ENCODE measurements at regions of chr12 and their contacts with region 1.

Region 1: GRCh38 chr12:103548622-103549601 is 38.2 kb upstream of the STAB2 start:
- DNase-seq: peak; percentile 54
- H3K4me3 Mint-ChIP-seq: no peak overlapping the region
- H3K27ac Mint-ChIP-seq: no peak overlapping the region
- H3K4me1 Mint-ChIP-seq: peaks cover 13% of the 10 kb centered on the region
- H3K27me3 Mint-ChIP-seq: peaks cover 17% of the 10 kb centered on the region

Region 2: GRCh38 chr12:102948941-102949352 is 600.0 kb before region 1 on chr12:
- intact Hi-C with region 1: loop called (anchors 1 kb)
- DNase-seq: no peak
- H3K4me3 Mint-ChIP-seq: no peak overlapping the region
- H3K27ac Mint-ChIP-seq: no peak overlapping the region
- H3K4me1 Mint-ChIP-seq: peaks cover 21% of the 10 kb centered on the region
- H3K27me3 Mint-ChIP-seq: peaks cover 45% of the 10 kb centered on the region

Region 3: GRCh38 chr12:103020839-103021238 is 528.1 kb before region 1 on chr12:
- intact Hi-C with region 1: loop called (anchors 10 kb)
- DNase-seq: no peak
- H3K4me3 Mint-ChIP-seq: no peak overlapping the region
- H3K27ac Mint-ChIP-seq: no peak overlapping the region
- H3K4me1 Mint-ChIP-seq: no peaks in the 10 kb centered on the region
- H3K27me3 Mint-ChIP-seq: no peaks in the 10 kb centered on the region

Region 4: GRCh38 chr12:103102225-103102744 is 446.6 kb before region 1 on chr12:
- intact Hi-C with region 1: loop called (anchors 5 kb)
- DNase-seq: no peak
- H3K4me3 Mint-ChIP-seq: no peak overlapping the region
- H3K27ac Mint-ChIP-seq: peak overlapping the region; percentile 60
- H3K4me1 Mint-ChIP-seq: peaks cover 8% of the 10 kb centered on the region
- H3K27me3 Mint-ChIP-seq: no peaks in the 10 kb centered on the region

Region 5: DNA sequence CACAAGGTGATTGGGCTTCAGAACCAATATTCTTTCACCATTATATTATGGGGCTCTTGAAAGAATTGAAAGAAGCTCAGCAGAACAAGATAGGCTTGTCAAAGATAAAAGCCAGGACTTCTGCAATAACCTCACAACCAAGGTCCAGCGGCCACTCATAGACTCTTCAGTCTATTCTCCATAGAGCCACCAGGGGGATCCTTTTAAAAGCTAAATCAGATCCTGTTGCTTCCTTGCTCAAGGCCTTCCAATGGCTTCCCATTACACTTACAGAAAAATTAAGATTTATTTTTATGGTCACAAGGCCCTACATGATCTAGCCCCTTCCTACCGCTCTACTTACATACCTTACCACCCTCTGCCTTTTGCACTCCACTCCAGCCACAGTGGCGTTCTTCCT is 222.7 kb before region 1 on chr12:
- intact Hi-C with region 1: loop called (anchors 1 kb)
- DNase-seq: no peak
- H3K4me3 Mint-ChIP-seq: no peak overlapping the region
- H3K27ac Mint-ChIP-seq: no peak overlapping the region
- H3K4me1 Mint-ChIP-seq: no peaks in the 10 kb centered on the region
- H3K27me3 Mint-ChIP-seq: no peaks in the 10 kb centered on the region

Region 6: DNA sequence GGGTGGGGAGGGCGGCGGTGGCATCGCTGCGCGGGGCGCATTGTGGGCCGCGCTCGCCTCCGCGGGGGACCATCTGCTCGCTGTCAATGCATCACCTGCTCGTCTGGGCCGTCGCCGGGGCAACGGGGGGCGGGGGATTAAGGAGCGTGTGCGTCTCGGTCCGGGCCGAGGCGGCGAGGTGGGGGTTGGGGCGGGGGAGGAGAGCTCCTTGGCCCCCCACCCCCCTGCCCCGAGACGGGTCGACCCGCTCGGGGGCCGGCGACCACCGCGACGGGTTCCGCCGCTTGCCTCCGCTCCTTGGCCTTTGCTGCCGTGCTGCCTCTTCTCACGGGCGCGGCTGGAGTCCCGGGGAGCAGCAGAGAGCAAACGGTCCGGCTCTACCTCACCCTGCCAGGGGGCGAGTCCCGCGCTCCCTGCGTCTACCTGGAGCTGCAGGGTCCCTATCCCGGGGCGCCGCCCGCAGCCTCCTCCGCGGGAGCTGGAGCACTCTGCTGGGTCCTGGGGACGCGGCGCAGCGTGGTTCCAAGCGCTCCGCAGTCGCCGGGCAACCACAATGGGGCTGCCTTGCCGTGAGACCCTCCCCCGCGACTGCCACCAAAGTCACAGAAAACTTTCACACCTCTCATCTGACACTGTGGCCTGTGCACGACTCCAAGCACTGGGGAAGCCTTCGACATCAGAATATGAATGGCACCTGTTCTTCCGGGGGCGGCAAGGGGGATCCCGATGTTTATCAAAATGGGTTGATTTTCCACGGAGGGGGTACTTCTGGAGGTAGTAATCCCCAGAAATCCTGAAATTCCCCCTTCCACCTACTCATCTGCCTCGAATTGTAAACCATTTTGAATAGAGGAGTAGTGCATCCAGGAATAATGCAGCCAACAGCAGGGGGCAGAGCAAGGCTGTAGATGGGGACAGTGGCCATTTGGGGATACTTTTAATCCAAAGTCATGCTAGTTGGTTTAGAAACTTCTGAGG is 53.1 kb before region 1 on chr12 and contains the start of gene C12orf42:
- intact Hi-C with region 1: loop called (anchors 1 kb)
- DNase-seq: peak; percentile 16
- H3K4me3 Mint-ChIP-seq: peak within 1 kb of the TSS; percentile 70
- H3K27ac Mint-ChIP-seq: peak within 1 kb of the TSS; percentile 53
- H3K4me1 Mint-ChIP-seq: peaks cover 27% of the 10 kb centered on the region
- H3K27me3 Mint-ChIP-seq: peaks cover 28% of the 10 kb centered on the region
- total RNA-seq, gene C12orf42: not detected in 2 replicates

Region 7: GRCh38 chr12:103503977-103504376 is 44.9 kb before region 1 on chr12:
- intact Hi-C with region 1: loop called (anchors 2 kb)
- DNase-seq: peak; percentile 28
- H3K4me3 Mint-ChIP-seq: no peak overlapping the region
- H3K27ac Mint-ChIP-seq: no peak overlapping the region
- H3K4me1 Mint-ChIP-seq: peaks cover 41% of the 10 kb centered on the region
- H3K27me3 Mint-ChIP-seq: peaks cover 19% of the 10 kb centered on the region

Region 8: DNA sequence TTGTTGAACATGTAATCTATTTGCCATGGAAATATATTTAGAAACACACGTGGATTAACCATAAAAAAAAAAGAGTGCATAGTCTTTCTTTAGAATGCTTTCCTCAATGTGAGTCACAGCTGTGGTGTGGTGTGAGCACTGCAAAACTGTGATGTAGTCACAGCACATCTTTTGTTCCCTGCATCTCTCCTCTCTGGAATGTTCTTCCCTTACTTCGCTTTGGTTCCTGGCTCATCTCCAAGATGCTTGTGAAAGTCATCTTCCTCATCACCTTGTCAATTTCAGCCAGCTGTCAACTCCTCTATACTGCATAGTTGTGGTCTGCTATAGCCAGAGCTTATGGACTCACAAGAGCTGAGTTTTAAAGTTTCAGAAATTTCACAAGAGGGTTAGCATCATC is 98.4 kb after region 1 on chr12:
- intact Hi-C with region 1: no loop called
- DNase-seq: no peak
- H3K4me3 Mint-ChIP-seq: no peak overlapping the region
- H3K27ac Mint-ChIP-seq: no peak overlapping the region
- H3K4me1 Mint-ChIP-seq: no peaks in the 10 kb centered on the region
- H3K27me3 Mint-ChIP-seq: peaks cover 5% of the 10 kb centered on the region